ENCODE measurements at regions of chr18 and their contacts with region 1.

Region 1: GRCh38 chr18:12038639-12039417 is 54.8 kb upstream of the ANKRD62 start:
- DNase-seq: no peak
- H3K4me3 ChIP-seq: peak overlapping the region; percentile 52
- H3K27me3 ChIP-seq: no peaks in the 10 kb centered on the region; the same call in 1 of the 2 replicates
- CTCF ChIP-seq: peak; percentile 92

Region 2: GRCh38 chr18:11733031-11733430 is 305.8 kb before region 1 on chr18:
- CTCF ChIA-PET with region 1: interaction called, 26 read pairs
- POLR2A ChIA-PET with region 1: no interaction called
- DNase-seq: no peak
- H3K4me3 ChIP-seq: peak overlapping the region; percentile 25
- H3K27me3 ChIP-seq: peaks cover 4% of the 10 kb centered on the region; the same call in 1 of the 2 replicates
- CTCF ChIP-seq: peak; percentile 96

Region 3: DNA sequence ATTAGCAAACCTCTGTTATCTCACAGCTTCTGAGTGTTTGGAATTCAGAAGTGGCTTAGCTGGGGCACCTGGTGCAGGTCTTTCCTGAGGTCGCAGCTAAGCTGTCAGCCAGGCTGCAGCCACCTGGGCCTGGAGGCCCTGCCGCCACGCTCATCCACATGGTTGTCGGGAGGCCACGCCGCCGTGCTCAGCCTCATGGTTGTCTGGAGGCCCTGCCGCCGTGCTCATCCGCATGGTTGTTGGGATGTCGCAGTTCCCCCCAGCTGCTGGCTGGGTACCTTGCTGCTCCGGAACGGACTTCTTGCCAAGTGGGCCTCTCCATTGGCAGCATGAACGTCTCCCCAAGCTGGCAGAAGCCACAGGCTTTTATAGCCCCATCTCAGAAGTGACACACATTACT is 106.4 kb before region 1 on chr18:
- CTCF ChIA-PET with region 1: interaction called, 34 read pairs
- POLR2A ChIA-PET with region 1: no interaction called
- DNase-seq: no peak
- H3K4me3 ChIP-seq: no peak overlapping the region
- H3K27me3 ChIP-seq: no peaks in the 10 kb centered on the region
- CTCF ChIP-seq: no peak

Region 4: GRCh38 chr18:12028674-12029073 is 10.2 kb before region 1 on chr18:
- CTCF ChIA-PET with region 1: interaction called, 10 read pairs
- POLR2A ChIA-PET with region 1: no interaction called
- DNase-seq: no peak
- H3K4me3 ChIP-seq: no peak overlapping the region
- H3K27me3 ChIP-seq: no peaks in the 10 kb centered on the region
- CTCF ChIP-seq: no peak

Region 5: DNA sequence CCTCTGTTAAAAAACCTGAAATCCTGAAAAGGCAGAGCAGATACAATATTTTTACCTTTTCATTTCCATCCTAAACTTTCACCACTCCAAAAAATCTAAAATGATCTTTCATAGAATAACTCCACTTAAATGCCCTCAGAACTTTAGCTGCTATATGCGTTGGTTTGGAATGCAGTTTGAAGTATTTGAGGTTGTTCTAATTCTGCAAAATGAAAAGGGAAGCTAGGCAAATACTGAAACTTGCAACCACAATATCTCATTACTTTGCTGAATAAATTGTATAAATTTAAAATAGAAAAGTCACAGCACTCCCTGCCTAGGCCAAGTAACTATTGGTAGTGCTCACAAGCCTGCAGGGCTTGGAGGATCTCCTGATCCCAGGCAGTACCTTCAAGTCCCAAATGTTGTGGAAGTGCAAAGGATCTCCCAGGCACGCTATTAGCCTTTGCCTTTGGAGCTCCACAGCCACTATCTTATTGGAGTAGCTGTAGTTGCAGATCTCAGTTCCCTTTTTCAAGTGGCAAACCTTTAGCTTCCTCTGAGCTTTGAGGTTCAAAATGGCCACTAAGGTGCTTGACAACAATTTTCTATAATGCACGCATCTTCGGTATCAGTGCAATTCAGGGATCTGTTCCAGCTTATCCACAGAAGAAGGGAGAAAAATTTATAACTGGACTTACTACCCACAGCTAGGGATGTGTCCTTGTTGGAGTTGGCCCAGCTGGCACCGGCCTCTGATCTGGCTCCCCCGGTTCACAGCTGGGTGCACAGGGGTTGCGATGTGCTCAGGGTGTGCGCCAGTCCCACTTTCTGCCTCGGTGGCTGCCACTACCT is 11.4 kb after region 1 on chr18:
- CTCF ChIA-PET with region 1: interaction called, 20 read pairs
- POLR2A ChIA-PET with region 1: no interaction called
- DNase-seq: no peak
- H3K4me3 ChIP-seq: no peak overlapping the region
- H3K27me3 ChIP-seq: no peaks in the 10 kb centered on the region
- CTCF ChIP-seq: no peak

Region 6: GRCh38 chr18:12162786-12163185 is 124.0 kb after region 1 on chr18:
- CTCF ChIA-PET with region 1: no interaction called
- POLR2A ChIA-PET with region 1: no interaction called
- DNase-seq: no peak
- H3K4me3 ChIP-seq: no peak overlapping the region
- H3K27me3 ChIP-seq: no peaks in the 10 kb centered on the region
- CTCF ChIP-seq: no peak

Region 7: DNA sequence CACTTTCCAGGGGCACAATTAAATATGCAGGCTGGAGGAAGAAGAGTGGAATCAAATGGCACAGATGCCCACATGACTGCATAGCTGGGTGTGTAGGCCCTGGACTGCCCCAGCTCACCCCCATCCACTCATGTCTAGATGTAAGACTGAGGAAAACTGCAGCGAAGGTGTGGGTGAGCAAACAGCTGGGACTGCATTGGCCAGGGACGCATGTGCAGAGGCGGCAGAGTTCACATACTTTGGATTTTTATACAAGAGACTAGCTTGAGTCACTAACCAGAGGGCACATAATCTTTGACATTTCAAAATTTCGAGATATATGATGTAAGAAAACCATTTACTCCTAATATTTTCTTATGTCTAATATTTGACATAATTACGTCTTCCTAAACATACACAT is 558.9 kb after region 1 on chr18:
- CTCF ChIA-PET with region 1: no interaction called
- POLR2A ChIA-PET with region 1: no interaction called
- DNase-seq: peak; percentile 70
- H3K4me3 ChIP-seq: no peak overlapping the region
- H3K27me3 ChIP-seq: no peaks in the 10 kb centered on the region
- CTCF ChIP-seq: no peak

Measured in BJ (cell line).